CD14-positive monocyte (primary cell): ENCODE measurements at regions of chr10 and their contacts with region 1.

Region 1: GRCh38 chr10:58334817-58335305 is at the start of gene UBE2D1:
- DNase-seq: peak; percentile 77 to 85 (median 82)
- H3K4me3 ChIP-seq: peak within 1 kb of the TSS; percentile 65 to 95 (median 93)
- H3K4me3 Mint-ChIP-seq: peak within 1 kb of the TSS; percentile 97 to 100
- H3K27ac ChIP-seq: peak within 1 kb of the TSS; percentile 67 to 91
- H3K27ac Mint-ChIP-seq: peak within 1 kb of the TSS; percentile 90 to 99 (median 95)
- H3K4me1 ChIP-seq: peaks cover 53 to 72% of the 10 kb centered on the region in 2 donors
- H3K4me1 Mint-ChIP-seq: peaks cover 75% of the 10 kb centered on the region
- H3K27me3 ChIP-seq: no peaks in the 10 kb centered on the region
- H3K27me3 Mint-ChIP-seq: no peaks in the 10 kb centered on the region
- CTCF ChIP-seq: no peak
- polyA plus RNA-seq, gene UBE2D1: 47.7 to 119 (median 107) TPM

Region 2: GRCh38 chr10:58225654-58226053 is 109.2 kb before region 1 on chr10:
- intact Hi-C with region 1: no loop called
- DNase-seq: no peak
- H3K4me3 ChIP-seq: no peak overlapping the region
- H3K4me3 Mint-ChIP-seq: no peak overlapping the region
- H3K27ac ChIP-seq: no peak overlapping the region
- H3K27ac Mint-ChIP-seq: peak overlapping the region in 1 of 7 donors; percentile 1
- H3K4me1 ChIP-seq: no peaks in the 10 kb centered on the region
- H3K4me1 Mint-ChIP-seq: no peaks in the 10 kb centered on the region
- H3K27me3 ChIP-seq: no peaks in the 10 kb centered on the region
- H3K27me3 Mint-ChIP-seq: no peaks in the 10 kb centered on the region
- CTCF ChIP-seq: no peak

Region 3: DNA sequence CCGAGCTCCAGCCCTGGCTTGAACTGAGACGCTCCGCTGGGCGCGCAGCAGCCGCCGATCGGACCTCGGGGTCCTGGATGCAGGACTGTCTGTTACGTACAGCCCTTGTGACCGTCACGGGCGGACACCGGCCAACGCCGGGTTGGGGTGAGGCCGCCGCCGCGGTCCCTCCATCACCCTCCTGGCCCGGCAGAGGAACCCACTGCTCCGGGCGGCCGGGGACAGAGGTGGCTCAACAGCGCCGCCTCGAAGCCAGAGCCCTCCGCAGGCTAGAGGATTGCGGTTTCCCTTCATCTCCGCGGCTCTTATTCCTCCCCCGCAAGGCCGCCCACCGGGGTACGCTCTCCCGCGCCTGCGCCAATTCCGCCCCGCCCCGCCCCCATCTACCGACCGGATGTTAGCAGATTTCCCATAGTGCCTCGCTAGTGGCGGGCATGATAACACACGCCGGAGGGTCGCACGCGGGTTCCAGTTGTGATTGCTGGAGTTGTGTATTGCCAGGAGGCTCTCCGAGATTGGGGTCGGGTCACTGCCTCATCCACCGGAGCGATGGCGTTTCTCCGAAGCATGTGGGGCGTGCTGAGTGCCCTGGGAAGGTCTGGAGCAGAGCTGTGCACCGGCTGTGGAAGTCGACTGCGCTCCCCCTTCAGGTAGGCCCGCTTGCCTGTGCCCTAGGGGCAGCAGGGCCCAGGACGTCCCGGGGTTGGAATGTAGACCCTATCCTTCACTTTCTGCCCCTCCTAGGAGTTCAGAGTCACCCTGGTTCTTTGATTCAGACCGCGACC is 50.3 kb after region 1 on chr10 and contains the start of gene TFAM:
- intact Hi-C with region 1: loop called (anchors 5 kb)
- DNase-seq: peak; percentile 76 to 92 (median 90)
- H3K4me3 ChIP-seq: peak within 1 kb of the TSS; percentile 68 to 93 (median 77)
- H3K4me3 Mint-ChIP-seq: peak within 1 kb of the TSS; percentile 97 to 99
- H3K27ac ChIP-seq: peak within 1 kb of the TSS; percentile 97
- H3K27ac Mint-ChIP-seq: peak within 1 kb of the TSS; percentile 97 to 99 (median 98)
- H3K4me1 ChIP-seq: peaks cover 32 to 42% of the 10 kb centered on the region in 2 donors
- H3K4me1 Mint-ChIP-seq: peaks cover 43% of the 10 kb centered on the region
- H3K27me3 ChIP-seq: no peaks in the 10 kb centered on the region
- H3K27me3 Mint-ChIP-seq: no peaks in the 10 kb centered on the region
- CTCF ChIP-seq: peak; percentile 46
- polyA plus RNA-seq, gene TFAM: 5.9 to 34.4 (median 33.8) TPM